PC-9 (cell line): ENCODE measurements at regions of chr1 and their contacts with region 1.

Region 1: DNA sequence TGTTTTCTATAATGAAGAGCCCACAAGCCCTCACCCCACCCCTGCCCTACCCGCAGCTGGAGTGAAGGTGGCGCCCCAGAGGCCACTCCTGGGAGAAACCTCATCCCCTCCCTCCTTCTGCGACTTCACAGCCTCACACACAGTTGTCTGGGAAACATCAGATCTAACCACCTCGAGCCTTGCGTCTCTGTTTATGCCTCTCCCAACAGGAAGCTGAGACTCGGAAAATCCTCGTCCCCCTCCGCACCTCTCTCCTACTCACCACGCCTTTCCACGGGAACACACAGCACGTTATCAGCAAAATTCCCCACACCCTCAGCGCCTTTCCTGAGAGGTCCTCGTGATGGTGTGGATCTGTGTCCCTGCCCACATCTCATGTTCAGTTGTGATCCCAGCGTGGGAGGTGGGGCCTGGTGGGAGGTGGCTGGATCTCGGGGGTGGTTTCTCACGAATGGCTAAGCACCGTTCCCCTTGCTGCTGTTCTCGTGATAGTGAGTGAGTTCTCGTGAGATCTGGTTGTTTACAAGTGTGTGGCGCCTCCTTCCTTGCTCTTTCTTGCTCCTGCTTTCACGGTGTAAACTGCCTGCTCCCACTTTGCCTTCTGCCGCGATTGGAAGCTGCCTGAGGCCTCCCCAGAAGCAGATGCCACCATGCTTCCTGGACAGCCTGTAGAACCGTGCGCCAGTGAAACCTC is 190.6 kb downstream of the KIF26B start:
- DNase-seq: no peak
- H3K4me3 ChIP-seq: no peak overlapping the region
- H3K27ac ChIP-seq: no peak overlapping the region
- H3K4me1 ChIP-seq: no peaks in the 10 kb centered on the region
- H3K27me3 ChIP-seq: peaks cover 85% of the 10 kb centered on the region
- CTCF ChIP-seq: no peak

Region 2: DNA sequence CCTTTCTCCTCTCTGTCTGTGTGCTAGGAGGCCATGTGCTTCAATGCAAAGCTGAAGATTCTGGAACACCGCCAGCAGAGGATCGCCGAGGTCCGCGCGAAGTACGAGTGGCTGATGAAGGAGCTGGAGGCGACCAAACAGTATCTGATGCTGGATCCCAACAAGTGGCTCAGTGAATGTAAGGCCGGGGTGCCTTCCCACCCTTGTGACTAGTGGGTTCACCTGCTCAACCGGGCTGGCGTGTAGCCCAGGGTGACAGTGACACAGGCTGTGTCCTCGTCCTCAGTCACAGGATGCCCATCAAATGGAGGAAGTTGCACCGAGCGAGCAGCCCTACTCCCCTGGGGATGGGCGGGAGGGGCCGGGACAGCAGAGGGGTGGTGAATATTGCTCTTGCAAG is 353.5 kb after region 1 on chr1:
- CTCF ChIA-PET with region 1: no interaction called
- POLR2A ChIA-PET with region 1: interaction called, 14 read pairs
- intact Hi-C with region 1: no loop called
- DNase-seq: no peak
- H3K4me3 ChIP-seq: no peak overlapping the region
- H3K27ac ChIP-seq: no peak overlapping the region
- H3K4me1 ChIP-seq: no peaks in the 10 kb centered on the region
- H3K27me3 ChIP-seq: peaks cover 87% of the 10 kb centered on the region
- CTCF ChIP-seq: no peak